Breast epithelium (tissue), 4 donors: ENCODE measurements at regions of chr6 and their contacts with region 1.

Region 1: DNA sequence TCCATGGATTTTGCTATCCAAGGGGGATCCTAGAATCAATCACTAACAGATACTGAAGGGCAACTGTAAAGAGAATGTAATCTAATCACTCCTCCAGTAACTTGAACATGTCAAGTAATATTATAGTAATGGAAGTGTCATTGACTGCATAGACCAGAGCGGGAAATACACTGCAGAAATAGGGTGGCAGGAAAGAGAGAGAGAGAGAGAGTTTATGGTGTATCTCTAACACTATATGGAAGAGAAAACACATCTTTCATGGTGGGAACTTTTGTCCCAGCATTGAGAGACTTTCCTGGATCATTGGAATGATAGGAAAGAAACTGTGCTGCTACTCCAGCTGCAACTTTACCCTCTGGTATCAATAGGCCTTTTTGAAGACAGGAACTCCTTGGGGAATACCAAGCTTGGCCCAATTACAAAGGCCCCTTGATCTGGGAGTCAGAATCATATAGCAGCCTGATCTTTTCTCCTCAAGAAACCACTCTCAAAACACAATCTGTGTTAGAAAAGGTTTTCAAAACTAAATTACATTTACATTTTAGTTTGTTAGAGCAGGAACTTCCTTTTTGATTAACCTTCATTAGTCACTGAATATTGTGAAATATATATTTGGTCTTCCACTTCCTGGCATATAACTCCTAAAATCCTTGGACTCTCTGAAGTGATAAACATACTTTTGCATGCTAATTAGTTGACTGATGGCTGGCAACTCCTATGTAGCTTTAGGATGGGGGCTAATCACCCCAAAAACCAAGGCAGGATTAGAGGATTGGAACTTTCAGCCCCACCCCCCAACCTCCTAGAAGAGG is 29.5 kb upstream of the RNGTT start:
- DNase-seq: no peak
- H3K4me3 ChIP-seq: no peak overlapping the region
- H3K27ac ChIP-seq: no peak overlapping the region
- H3K4me1 ChIP-seq: no peaks in the 10 kb centered on the region
- H3K27me3 ChIP-seq: no peaks in the 10 kb centered on the region
- CTCF ChIP-seq: no peak
- POLR2A ChIP-seq: no peak

Region 2: DNA sequence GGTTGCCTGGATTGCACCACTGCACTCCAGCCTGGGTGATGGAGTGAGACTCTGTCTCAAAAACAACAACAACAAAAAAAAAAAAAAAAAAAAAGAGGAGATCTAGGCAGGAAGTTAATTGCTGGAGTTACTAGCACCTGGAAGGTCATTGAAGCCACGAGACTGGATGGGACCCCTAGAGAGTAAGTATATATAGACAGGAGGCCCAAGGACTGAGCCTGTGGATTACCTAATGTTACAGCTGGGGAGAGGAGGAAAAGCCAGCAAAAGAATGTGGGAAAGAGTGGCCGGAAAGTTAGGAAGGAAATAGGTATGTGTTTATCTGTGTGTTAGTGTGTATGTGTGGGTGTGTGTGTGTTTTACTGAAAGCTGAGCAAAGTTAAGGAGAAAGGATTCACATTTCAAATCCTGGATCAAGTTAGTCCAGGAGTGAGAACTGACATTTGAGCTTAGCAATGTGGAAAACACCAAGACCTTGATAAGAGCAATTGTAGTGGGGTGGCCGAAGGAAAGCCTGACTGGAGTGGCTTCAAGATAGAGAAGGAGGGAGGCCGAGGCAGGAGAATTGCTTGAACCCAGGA is 478.4 kb after region 1 on chr6:
- intact Hi-C with region 1: loop called (anchors 5 kb)
- DNase-seq: no peak
- H3K4me3 ChIP-seq: no peak overlapping the region
- H3K27ac ChIP-seq: no peak overlapping the region
- H3K4me1 ChIP-seq: no peaks in the 10 kb centered on the region
- H3K27me3 ChIP-seq: no peaks in the 10 kb centered on the region
- CTCF ChIP-seq: no peak
- POLR2A ChIP-seq: no peak